AG04450 (cell line): ENCODE measurements at regions of chr13 and their contacts with region 1.

Region 1: GRCh38 chr13:91722267-91722884 is 324.0 kb downstream of the GPC5 start:
- DNase-seq: no peak
- H3K4me3 ChIP-seq: no peak overlapping the region
- H3K27ac ChIP-seq: no peak overlapping the region
- H3K27me3 ChIP-seq: no peaks in the 10 kb centered on the region
- CTCF ChIP-seq: peak; percentile 65

Region 2: DNA sequence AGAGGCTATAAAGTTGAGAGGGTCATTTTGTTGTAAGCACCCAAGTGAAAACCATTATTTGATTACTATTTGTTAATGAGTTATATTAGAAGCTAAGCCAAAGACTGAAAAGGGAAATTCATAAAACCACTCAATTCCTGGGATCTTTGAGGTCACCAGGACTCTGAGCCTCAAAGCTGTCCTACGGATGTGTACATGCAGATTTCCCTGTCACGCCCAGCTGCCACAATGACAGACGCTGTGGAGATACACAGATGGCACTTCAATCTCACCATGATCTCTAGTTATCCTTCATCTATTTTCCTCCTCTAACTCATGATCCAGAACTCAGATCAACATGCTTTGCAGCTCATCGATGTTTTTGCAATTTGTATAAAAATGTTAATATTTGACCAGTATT is 778.4 kb before region 1 on chr13:
- CTCF ChIA-PET with region 1: no interaction called
- POLR2A ChIA-PET with region 1: no interaction called
- DNase-seq: no peak
- H3K4me3 ChIP-seq: no peak overlapping the region
- H3K27ac ChIP-seq: no peak overlapping the region
- H3K27me3 ChIP-seq: no peaks in the 10 kb centered on the region
- CTCF ChIP-seq: no peak

Region 3: DNA sequence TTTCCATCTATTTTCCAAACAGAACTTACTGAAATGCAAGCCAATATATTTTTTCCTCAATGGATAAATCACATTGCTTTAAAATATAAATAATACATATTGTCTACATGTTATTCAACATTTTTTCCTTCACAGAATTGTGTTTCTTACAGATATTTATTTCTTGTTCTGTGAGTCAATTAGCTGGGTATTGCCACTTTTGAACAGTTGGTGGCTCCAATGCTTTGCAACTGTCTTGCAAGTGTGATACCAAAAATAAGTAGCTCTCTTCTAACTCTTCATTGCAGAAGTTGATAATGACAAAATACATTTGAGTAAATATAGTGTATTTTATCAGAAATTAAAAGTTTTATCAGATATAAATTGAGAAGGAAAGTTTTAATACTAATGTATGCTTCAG is 341.0 kb before region 1 on chr13:
- CTCF ChIA-PET with region 1: interaction called, 15 read pairs
- POLR2A ChIA-PET with region 1: no interaction called
- DNase-seq: no peak
- H3K4me3 ChIP-seq: no peak overlapping the region
- H3K27ac ChIP-seq: no peak overlapping the region
- H3K27me3 ChIP-seq: no peaks in the 10 kb centered on the region
- CTCF ChIP-seq: peak; percentile 46

Region 4: GRCh38 chr13:91609353-91609752 is 113.0 kb before region 1 on chr13:
- CTCF ChIA-PET with region 1: no interaction called
- POLR2A ChIA-PET with region 1: no interaction called
- DNase-seq: peak; percentile 8
- H3K4me3 ChIP-seq: no peak overlapping the region
- H3K27ac ChIP-seq: no peak overlapping the region
- H3K27me3 ChIP-seq: no peaks in the 10 kb centered on the region
- CTCF ChIP-seq: no peak